AG04449 (cell line): ENCODE measurements at regions of chr7 and their contacts with region 1.

Region 1: DNA sequence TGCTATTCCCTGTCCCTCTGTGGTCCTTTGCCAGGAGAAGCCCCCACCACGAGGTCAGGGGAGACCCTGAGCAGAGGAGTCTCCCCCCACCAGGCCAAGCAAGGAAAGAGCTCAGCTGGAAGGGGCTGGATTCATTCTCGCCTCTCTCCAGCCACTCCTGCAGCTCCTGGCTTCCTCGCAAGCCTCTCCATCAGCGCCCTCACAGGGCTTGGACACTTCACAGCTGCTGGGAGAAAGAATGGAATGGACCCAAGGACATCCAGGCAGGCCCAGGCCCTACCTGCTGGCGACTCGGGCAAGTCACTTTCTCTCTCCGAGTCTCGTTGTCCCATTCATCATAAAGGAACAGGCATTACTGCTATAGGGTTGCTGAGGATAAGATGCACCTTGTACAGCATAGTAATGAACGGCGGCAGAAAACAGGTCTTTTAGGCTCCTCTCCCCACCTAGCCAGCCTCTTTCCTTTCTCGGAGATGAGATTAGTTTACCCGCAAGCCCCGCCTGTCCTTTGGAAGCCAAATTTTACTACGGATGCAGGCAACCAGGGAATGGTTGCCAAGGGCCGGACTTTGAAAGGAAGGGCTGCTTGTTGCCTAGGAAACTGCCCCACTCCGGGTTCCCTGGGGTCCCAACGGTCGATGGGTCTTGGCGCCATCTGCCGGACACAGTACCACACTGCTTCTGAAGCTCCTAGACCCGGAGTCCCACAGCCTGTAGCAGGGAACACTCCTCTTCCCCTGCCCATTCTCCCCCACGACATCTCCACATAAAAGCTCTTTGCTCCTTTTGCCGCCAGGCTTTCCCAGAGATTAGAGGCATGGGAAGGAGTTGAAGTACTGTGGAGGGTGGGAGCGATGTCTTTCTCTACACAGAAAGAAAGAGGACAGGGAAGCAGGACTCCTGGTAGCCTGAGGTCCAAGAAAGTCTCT is 22.3 kb downstream of the IMPDH1 start:
- DNase-seq: no peak
- H3K4me3 ChIP-seq: no peak overlapping the region
- CTCF ChIP-seq: peak; percentile 89

Region 2: DNA sequence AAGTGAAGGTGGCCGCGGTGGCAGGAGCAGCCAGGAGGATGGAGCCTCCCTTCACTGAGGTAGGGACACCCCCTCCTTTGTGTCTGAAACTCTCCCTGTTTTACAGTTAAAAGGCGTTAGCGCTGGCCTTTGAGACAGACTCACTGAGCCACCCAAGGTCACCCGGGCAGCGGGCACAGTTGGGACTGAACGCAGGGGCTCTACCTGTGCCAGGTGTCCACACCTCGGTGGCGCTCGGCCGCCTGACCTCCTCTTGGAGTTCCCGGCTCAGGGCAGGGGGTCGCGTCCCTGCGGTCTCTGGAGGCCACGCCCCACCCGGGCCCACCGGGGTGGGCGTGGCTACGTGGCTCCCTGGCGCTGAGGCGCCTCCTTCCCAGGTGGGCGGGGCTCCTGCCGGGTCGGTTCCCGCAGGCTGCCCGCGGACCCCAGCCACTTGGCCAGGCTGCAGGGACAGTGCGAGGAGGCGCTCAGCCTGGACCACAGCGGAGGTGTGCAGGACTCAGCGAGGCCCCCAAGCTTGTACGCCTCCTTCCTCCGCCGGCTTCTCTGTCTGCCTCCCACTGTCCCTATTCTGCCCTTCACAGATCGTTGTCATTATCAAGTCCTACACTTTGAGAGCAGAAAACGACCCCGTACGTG is 186.3 kb before region 1 on chr7:
- CTCF ChIA-PET with region 1: no interaction called
- POLR2A ChIA-PET with region 1: no interaction called
- DNase-seq: no peak
- H3K4me3 ChIP-seq: no peak overlapping the region
- CTCF ChIP-seq: no peak

Region 3: GRCh38 chr7:128352153-128352537 is 35.3 kb before region 1 on chr7:
- CTCF ChIA-PET with region 1: interaction called, 690 read pairs
- POLR2A ChIA-PET with region 1: interaction called, 9 read pairs
- DNase-seq: no peak
- H3K4me3 ChIP-seq: no peak overlapping the region
- CTCF ChIP-seq: peak; percentile 64

Region 4: GRCh38 chr7:128361411-128362379 is 25.8 kb before region 1 on chr7 and contains the start of gene PRRT4:
- CTCF ChIA-PET with region 1: interaction called, 176 read pairs
- POLR2A ChIA-PET with region 1: no interaction called
- DNase-seq: no peak
- H3K4me3 ChIP-seq: peak within 1 kb of the TSS; percentile 46
- CTCF ChIP-seq: no peak

Region 5: GRCh38 chr7:128409596-128410160 is 22.2 kb after region 1 on chr7 and contains the start of gene IMPDH1:
- CTCF ChIA-PET with region 1: interaction called, 145 read pairs
- POLR2A ChIA-PET with region 1: interaction called, 4 read pairs
- DNase-seq: no peak
- H3K4me3 ChIP-seq: peak within 1 kb of the TSS; percentile 85
- CTCF ChIP-seq: no peak

Region 6: DNA sequence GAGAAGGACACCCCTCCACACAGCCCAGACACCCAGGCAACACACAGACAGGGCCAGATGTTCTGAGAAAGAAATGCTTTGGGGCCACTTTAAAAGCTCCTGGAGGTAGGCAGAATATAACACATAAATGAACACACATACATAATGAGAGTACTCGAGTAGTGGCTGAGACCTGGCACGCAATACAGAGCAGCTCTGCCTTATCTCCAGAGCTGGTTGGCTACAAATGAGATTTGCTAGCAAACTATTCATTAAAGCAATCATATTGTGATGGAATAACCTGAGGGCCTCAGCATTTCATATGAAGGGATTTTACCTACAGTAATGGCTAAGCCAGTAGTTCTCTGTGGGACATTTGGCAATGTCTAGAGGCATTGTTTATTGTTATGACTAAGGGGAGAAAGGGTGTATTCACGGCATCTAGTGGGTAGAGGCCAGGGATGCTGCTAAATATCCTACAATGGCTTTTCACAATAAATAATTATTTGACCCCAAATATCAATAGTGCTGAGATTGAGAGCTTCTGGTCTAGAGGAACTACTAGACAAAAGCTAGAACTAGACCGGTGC is 27.8 kb after region 1 on chr7:
- CTCF ChIA-PET with region 1: interaction called, 19 read pairs
- POLR2A ChIA-PET with region 1: no interaction called
- DNase-seq: no peak
- H3K4me3 ChIP-seq: no peak overlapping the region
- CTCF ChIP-seq: no peak

Region 7: GRCh38 chr7:128791121-128791961 is 403.9 kb after region 1 on chr7:
- CTCF ChIA-PET with region 1: no interaction called
- POLR2A ChIA-PET with region 1: no interaction called
- DNase-seq: no peak
- H3K4me3 ChIP-seq: peak overlapping the region; percentile 78
- CTCF ChIP-seq: no peak